ENCODE measurements at regions of chr15 and their contacts with region 1.

Region 1: DNA sequence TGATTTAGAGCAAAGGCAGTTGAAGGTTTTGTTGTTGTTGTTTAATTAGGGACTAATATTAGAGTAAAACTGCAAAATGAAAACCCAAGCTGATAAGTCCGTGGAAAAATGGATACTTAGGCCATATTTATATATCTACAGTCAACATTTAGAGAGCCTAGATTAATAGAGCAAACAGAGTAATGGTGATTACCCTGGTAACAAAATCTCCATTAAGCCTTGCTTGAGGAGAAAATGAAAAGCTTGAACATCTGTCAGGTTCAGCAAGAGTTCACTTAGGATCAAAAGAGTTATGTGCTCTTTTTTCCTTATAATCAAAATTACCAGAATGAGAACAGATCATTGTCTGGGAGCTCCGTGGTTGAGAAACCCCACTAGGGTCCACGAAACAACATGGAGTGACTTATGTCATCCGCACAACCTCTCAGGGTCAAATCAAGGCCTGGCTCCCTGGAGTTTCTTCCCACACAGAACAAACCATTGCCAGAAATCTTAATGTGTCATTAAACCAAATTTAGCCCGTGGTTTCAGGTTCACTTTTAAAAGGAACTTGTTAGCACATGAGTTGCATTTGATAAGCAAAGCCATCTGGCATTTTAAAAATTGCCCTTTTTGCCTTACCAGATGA is 381.2 kb downstream of the GABRB3 start:
- ATAC-seq: peak in 4 of 8 experiments; percentile 32 to 70 (median 41)
- H3K4me3 ChIP-seq: no peak overlapping the region
- H3K27ac ChIP-seq: peak overlapping the region in 1 of 2 donors; percentile 41
- H3K4me1 ChIP-seq: peaks cover 14 to 23% of the 10 kb centered on the region in 2 donors

Region 2: DNA sequence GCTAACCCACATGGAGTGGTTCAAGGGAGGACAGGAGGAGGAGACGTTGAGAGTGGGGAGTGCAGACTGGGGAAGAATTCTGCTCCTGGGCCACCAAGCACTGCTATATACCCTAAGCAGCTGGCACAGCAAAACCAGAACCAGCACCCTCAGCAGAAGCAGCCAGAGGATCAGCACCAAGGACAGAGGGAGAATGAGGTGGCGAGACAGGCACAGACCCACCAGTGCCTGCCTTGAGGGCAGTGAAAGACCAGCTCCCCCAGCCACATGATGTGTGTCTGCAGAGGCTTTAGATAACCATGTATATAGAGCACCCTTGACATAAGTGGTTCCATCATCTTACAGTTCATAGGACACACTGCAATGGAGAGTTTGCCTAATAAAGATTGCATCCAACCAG is 62.2 kb after region 1 on chr15:
- in situ Hi-C with region 1: no loop called
- ATAC-seq: no peak
- H3K4me3 ChIP-seq: no peak overlapping the region
- H3K27ac ChIP-seq: no peak overlapping the region
- H3K4me1 ChIP-seq: peaks cover 0 to 3% of the 10 kb centered on the region in 2 donors

Region 3: DNA sequence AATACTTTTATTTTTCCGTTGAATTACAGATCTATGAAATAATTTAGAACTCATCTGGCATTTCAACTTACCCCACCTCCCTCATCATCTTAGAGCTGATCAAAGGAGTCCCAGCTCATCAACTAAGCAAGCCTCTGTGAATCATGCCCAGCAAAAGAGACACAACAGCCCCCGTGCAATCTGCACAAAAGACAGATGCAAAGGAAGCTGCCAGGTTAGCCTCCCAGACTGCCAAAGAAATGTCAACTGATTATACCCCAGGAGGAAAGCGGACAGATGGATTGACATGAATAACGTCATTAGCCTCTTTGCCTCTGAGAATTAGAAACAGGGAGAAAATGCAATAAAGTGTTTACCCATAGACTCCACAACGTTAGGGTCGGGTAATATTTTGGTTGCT is 306.2 kb after region 1 on chr15:
- in situ Hi-C with region 1: loop called in 1 of 9 experiments (anchors 25 kb)
- ATAC-seq: peak in 3 of 8 experiments; percentile 22 to 34 (median 30)
- H3K4me3 ChIP-seq: no peak overlapping the region
- H3K27ac ChIP-seq: no peak overlapping the region
- H3K4me1 ChIP-seq: peaks cover 8 to 10% of the 10 kb centered on the region in 2 donors

Measured in motor neuron (in vitro differentiated cells).